ENCODE measurements at regions of chr13 and their contacts with region 1.

Region 1: GRCh38 chr13:22793598-22794134 is 387.1 kb upstream of the SGCG start:
- DNase-seq: no peak
- H3K4me3 ChIP-seq: no peak overlapping the region
- H3K27ac ChIP-seq: no peak overlapping the region
- H3K27me3 ChIP-seq: no peaks in the 10 kb centered on the region
- CTCF ChIP-seq: no peak

Region 2: GRCh38 chr13:21576426-21576825 is 1217.2 kb before region 1 on chr13:
- CTCF ChIA-PET with region 1: interaction called, 11 read pairs
- POLR2A ChIA-PET with region 1: no interaction called
- DNase-seq: no peak
- H3K4me3 ChIP-seq: no peak overlapping the region
- H3K27ac ChIP-seq: no peak overlapping the region
- H3K27me3 ChIP-seq: no peaks in the 10 kb centered on the region
- CTCF ChIP-seq: no peak

Region 3: GRCh38 chr13:22828081-22828480 is 34.4 kb after region 1 on chr13:
- CTCF ChIA-PET with region 1: no interaction called
- POLR2A ChIA-PET with region 1: no interaction called
- DNase-seq: no peak
- H3K4me3 ChIP-seq: no peak overlapping the region
- H3K27ac ChIP-seq: no peak overlapping the region
- H3K27me3 ChIP-seq: no peaks in the 10 kb centered on the region
- CTCF ChIP-seq: no peak